Colonic mucosa (tissue), 4 donors: ENCODE measurements at regions of chr5 and their contacts with region 1.

Region 1: DNA sequence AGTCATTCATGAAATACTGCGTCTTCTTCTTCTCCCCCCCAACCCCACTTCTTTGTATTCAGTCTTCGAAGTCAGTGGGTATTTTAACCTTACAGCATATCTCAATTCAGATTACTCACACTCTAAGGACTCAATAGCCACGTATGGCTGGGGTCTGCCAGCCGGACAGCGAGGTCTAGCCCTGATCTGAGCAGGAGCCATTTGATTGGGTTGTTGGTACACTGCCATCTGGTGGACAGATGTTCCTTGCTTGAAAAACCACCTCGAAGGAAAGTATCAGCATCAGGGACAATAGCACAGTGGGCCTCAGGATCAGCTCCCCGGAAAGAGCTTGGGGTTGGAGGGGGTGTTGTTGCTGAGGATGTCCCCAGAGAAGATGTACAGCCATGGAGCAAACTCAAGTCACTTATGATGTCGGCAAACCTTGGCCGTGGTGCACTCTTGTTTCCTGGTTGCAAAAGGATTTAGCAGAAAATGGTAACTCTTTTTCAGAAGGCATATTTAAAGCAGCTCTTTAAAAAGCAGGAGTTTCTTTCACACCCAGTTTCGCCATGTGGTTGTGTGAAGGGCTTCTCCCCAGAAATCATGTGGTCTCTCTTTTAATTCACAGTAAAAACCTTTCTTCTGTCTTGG is 31.7 kb upstream of the KCNMB1 start:
- DNase-seq: peak; percentile 40
- H3K4me3 ChIP-seq: no peak overlapping the region
- H3K27ac ChIP-seq: no peak overlapping the region
- H3K4me1 ChIP-seq: no peaks in the 10 kb centered on the region
- H3K27me3 ChIP-seq: no peaks in the 10 kb centered on the region
- CTCF ChIP-seq: peak; percentile 66

Region 2: DNA sequence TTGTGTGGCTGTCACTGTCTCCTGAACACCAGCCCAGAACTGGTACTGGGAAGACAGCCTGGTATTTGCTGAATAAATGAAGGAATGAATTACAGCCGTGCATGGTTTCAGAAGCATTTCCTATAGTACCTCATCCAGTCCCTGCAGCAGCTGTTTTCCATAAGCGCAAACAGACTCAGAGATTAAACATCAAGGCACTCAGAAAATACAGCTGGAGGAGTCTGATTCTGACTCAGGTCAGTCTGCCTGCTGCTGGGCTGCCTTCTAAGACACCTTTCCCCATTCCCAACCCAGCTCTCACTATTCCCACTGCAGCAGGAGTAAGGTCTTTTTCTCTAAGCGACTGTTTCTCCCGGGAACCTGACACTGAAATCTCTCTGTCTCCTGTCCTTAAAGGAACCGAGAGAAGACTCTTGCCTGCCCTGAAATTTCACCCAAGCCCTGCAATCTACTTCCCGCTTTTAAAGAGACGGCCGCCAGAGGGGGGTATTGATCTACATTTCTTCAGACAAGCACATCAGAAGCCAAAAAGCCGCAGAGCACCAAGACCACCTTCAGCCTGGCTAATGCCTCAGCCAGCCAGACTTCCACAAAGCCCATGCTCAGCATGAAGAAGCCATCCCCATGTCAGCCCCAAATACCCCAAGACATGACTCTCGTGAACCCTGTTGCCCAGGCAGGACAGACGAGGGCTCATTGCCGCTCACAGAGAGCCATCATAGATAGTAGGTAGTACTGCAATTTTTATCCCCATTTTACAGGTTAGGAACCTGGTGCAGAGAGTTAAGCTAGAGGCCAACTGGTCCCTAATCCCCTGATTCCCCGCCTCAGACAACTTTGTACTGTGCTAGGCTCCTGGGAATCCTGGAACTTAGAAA is 320.6 kb before region 1 on chr5:
- intact Hi-C with region 1: loop called (anchors 5 kb)
- DNase-seq: peak; percentile 70
- H3K4me3 ChIP-seq: no peak overlapping the region
- H3K27ac ChIP-seq: no peak overlapping the region
- H3K4me1 ChIP-seq: no peaks in the 10 kb centered on the region
- H3K27me3 ChIP-seq: no peaks in the 10 kb centered on the region
- CTCF ChIP-seq: peak; percentile 40

Region 3: GRCh38 chr5:170225326-170226128 is 195.4 kb before region 1 on chr5:
- intact Hi-C with region 1: loop called (anchors 5 kb)
- DNase-seq: peak; percentile 69
- H3K4me3 ChIP-seq: no peak overlapping the region
- H3K27ac ChIP-seq: no peak overlapping the region
- H3K4me1 ChIP-seq: no peaks in the 10 kb centered on the region
- H3K27me3 ChIP-seq: no peaks in the 10 kb centered on the region
- CTCF ChIP-seq: peak; percentile 60

Region 4: GRCh38 chr5:170267431-170268152 is 153.3 kb before region 1 on chr5:
- intact Hi-C with region 1: loop called (anchors 5 kb)
- DNase-seq: peak; percentile 67
- H3K4me3 ChIP-seq: no peak overlapping the region
- H3K27ac ChIP-seq: peak overlapping the region; percentile 27
- H3K4me1 ChIP-seq: no peaks in the 10 kb centered on the region
- H3K27me3 ChIP-seq: no peaks in the 10 kb centered on the region
- CTCF ChIP-seq: peak; percentile 74